ENCODE measurements at regions of chr10 and their contacts with region 1.

Region 1: DNA sequence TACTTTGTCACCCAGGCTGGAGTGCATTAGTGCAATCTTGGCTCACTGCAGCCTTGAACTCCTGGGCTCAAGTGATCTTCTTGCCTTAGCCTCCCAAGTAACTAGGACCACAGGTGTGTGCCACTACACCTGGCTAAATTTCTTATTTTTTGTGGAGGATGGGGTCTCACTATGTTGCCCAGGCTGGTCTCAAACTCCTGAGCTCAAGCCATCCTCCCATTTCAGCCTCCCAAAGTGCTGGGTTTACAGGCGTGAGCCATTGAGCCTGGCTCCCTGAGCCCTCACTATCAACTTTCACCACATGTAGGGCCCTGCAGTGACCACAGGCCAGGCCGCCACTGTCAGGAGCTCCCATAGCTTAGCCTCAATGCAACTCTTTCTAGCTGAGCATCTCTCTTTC is 110.2 kb downstream of the CUL2 start:
- DNase-seq: no peak
- H3K4me3 ChIP-seq: no peak overlapping the region
- H3K27ac ChIP-seq: no peak overlapping the region
- H3K4me1 ChIP-seq: no peaks in the 10 kb centered on the region
- H3K27me3 ChIP-seq: no peaks in the 10 kb centered on the region
- CTCF ChIP-seq: no peak
- POLR2A ChIP-seq: no peak

Region 2: DNA sequence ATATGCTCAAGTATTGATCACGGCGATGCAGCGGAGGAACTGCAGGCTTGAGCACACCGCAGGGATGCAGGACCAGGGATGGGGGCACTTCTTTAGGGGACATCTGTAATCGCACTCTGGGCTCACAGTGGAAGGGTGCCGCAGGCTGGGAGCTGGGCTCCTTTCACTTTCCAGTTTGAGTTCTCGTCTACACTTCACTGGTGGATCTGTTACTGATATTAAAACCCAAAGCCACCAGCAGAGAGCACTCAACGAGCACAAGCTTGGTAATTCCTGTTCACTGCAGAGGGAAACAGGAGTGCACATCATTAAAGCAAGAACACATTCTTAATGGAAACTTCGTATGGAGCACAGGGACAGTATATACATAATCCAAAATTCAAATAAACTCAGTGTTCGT is 256.2 kb before region 1 on chr10:
- intact Hi-C with region 1: loop called (anchors 10 kb)
- DNase-seq: peak; percentile 33
- H3K4me3 ChIP-seq: no peak overlapping the region
- H3K27ac ChIP-seq: no peak overlapping the region
- H3K4me1 ChIP-seq: peaks cover 4% of the 10 kb centered on the region
- H3K27me3 ChIP-seq: no peaks in the 10 kb centered on the region
- CTCF ChIP-seq: peak; percentile 11 to 54 (median 44)
- POLR2A ChIP-seq: no peak

Region 3: DNA sequence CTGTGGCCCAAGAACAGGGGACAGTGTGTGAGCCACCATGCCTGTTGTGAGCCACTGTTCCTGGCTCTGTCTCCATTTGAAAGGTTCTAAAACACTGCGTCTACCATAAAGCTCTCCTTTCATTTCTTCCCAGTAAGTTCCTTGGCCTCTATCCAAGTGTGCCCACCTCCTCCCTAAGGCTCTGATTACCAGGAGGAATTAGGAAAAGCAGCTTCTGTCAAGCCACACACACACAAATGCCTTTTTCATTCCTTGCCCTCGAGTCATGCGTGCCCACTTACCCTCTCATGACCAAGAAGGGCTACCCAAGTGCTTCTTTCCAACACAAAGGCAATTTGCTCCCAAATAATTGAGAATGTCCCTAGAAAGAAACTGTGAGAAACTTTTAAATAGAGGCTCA is 94.0 kb before region 1 on chr10:
- intact Hi-C with region 1: no loop called
- DNase-seq: no peak
- H3K4me3 ChIP-seq: no peak overlapping the region
- H3K27ac ChIP-seq: no peak overlapping the region
- H3K4me1 ChIP-seq: no peaks in the 10 kb centered on the region
- H3K27me3 ChIP-seq: no peaks in the 10 kb centered on the region
- CTCF ChIP-seq: no peak
- POLR2A ChIP-seq: no peak

Region 4: GRCh38 chr10:34960983-34961382 is 19.0 kb before region 1 on chr10:
- intact Hi-C with region 1: no loop called
- DNase-seq: no peak
- H3K4me3 ChIP-seq: no peak overlapping the region
- H3K27ac ChIP-seq: no peak overlapping the region
- H3K4me1 ChIP-seq: no peaks in the 10 kb centered on the region
- H3K27me3 ChIP-seq: no peaks in the 10 kb centered on the region
- CTCF ChIP-seq: peak in 2 of 4 experiments; percentile 17 to 25
- POLR2A ChIP-seq: no peak